ENCODE measurements at regions of chr7 and their contacts with region 1.

Region 1: GRCh38 chr7:36943591-36944435 is 219.5 kb upstream of the AOAH start:
- DNase-seq: no peak
- ATAC-seq: peak; percentile 78
- H3K4me3 ChIP-seq: peak overlapping the region; percentile 61
- H3K27ac ChIP-seq: peak overlapping the region; percentile 47
- H3K4me1 ChIP-seq: peaks cover 42% of the 10 kb centered on the region
- H3K27me3 ChIP-seq: no peaks in the 10 kb centered on the region
- CTCF ChIP-seq: no peak
- EP300 ChIP-seq: no peak
- POLR2A ChIP-seq: no peak
- RAD21 ChIP-seq: no peak

Region 2: DNA sequence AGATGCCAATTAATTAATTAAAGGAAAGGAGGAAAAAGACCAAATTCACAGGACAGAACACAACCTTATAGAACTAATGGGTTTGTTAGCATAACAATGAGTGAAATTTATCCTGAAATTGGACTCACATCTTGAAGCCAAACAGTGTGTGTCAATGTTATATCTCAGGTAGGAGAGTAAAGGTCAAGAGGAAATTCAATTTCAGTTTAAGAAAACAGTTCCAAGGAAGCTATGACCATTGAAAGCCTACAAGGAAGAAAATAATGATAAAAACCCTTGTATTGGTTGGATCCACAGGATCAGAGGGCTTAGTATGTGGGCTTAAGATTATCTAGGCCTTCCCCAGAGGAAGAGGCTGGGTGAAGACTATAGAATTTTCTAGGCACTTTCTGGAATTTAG is 20.6 kb before region 1 on chr7:
- CTCF ChIA-PET with region 1: interaction called, 9 read pairs
- POLR2A ChIA-PET with region 1: no interaction called
- RAD21 ChIA-PET with region 1: no interaction called
- SMC1A ChIA-PET with region 1: interaction called, 29 read pairs
- in situ Hi-C with region 1: no loop called
- intact Hi-C with region 1: no loop called
- DNase-seq: no peak
- ATAC-seq: no peak
- H3K4me3 ChIP-seq: no peak overlapping the region
- H3K27ac ChIP-seq: no peak overlapping the region
- H3K4me1 ChIP-seq: no peaks in the 10 kb centered on the region; the same call in 1 of the 2 replicates
- H3K27me3 ChIP-seq: no peaks in the 10 kb centered on the region
- CTCF ChIP-seq: no peak
- EP300 ChIP-seq: no peak
- POLR2A ChIP-seq: no peak
- RAD21 ChIP-seq: no peak

Region 3: DNA sequence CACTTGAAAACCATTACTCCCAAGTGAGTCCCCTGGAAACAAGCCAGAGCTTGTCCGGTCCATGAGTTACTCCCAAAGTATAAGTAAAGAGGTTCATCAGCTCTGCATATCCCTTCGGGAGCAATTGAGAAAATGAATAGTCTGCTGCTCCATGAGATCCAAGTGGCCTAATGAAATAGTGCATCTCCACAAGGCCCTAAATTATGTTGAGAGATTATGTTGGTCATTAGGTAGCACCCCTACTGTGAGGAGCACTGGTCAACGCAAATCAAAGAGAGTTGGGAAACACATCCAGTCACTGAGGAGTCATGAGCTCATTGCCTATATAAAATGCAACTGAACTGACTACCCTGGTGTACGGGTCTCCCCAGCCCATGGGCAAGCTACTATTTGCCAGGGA is 14.0 kb before region 1 on chr7:
- CTCF ChIA-PET with region 1: interaction called, 9 read pairs
- POLR2A ChIA-PET with region 1: no interaction called
- RAD21 ChIA-PET with region 1: interaction called, 6 read pairs
- SMC1A ChIA-PET with region 1: interaction called, 29 read pairs
- in situ Hi-C with region 1: no loop called
- intact Hi-C with region 1: no loop called
- DNase-seq: no peak
- ATAC-seq: no peak
- H3K4me3 ChIP-seq: no peak overlapping the region
- H3K27ac ChIP-seq: no peak overlapping the region
- H3K4me1 ChIP-seq: no peaks in the 10 kb centered on the region
- H3K27me3 ChIP-seq: no peaks in the 10 kb centered on the region
- CTCF ChIP-seq: no peak
- EP300 ChIP-seq: no peak
- POLR2A ChIP-seq: no peak
- RAD21 ChIP-seq: no peak

Region 4: DNA sequence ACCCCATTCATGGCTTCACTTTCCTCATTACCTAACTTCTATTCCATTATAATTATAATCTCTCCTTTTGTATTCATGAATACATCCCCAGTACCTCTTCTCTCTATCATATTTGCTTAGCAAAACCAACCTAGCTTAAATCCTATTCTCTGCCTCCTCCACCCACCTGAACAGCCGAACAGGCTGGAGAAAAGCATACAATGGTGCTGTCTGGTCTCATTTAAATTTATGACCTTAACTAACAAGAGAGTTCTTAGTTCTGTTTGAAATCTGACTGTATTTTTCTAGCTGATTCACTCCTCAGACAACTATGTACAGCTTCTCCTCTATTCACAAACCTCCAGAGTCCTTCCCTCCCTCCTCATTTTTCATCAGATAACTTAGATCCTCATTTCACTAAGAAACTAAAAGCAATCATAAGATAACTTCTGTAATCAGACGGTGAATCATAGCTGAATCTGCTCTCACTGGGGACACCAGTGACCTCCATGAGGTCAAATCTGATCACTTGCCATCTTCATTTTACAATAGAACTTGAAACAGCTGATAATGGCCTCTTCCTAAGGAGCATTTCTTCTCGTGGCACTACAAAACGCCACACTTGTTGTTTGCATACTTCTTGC is 14.4 kb after region 1 on chr7:
- CTCF ChIA-PET with region 1: interaction called, 7 read pairs
- POLR2A ChIA-PET with region 1: interaction called, 27 read pairs
- RAD21 ChIA-PET with region 1: interaction called, 22 read pairs
- SMC1A ChIA-PET with region 1: interaction called, 92 read pairs
- in situ Hi-C with region 1: no loop called
- intact Hi-C with region 1: no loop called
- DNase-seq: no peak
- ATAC-seq: no peak
- H3K4me3 ChIP-seq: no peak overlapping the region
- H3K27ac ChIP-seq: no peak overlapping the region
- H3K4me1 ChIP-seq: peaks cover 30% of the 10 kb centered on the region
- H3K27me3 ChIP-seq: no peaks in the 10 kb centered on the region
- CTCF ChIP-seq: no peak
- EP300 ChIP-seq: no peak
- POLR2A ChIP-seq: no peak
- RAD21 ChIP-seq: no peak

Region 5: GRCh38 chr7:36967387-36967786 is 23.6 kb after region 1 on chr7:
- CTCF ChIA-PET with region 1: interaction called, 16 read pairs
- POLR2A ChIA-PET with region 1: interaction called, 3 read pairs
- RAD21 ChIA-PET with region 1: interaction called, 22 read pairs
- SMC1A ChIA-PET with region 1: interaction called, 92 read pairs
- in situ Hi-C with region 1: no loop called
- intact Hi-C with region 1: no loop called
- DNase-seq: no peak
- ATAC-seq: peak; percentile 98
- H3K4me3 ChIP-seq: no peak overlapping the region
- H3K27ac ChIP-seq: no peak overlapping the region
- H3K4me1 ChIP-seq: no peaks in the 10 kb centered on the region
- H3K27me3 ChIP-seq: no peaks in the 10 kb centered on the region
- CTCF ChIP-seq: peak; percentile 51 to 70 (median 53)
- EP300 ChIP-seq: no peak
- POLR2A ChIP-seq: no peak
- RAD21 ChIP-seq: no peak